Activated naive CD4-positive, alpha-beta T cell treated with anti-CD3 and anti-CD28 coated beads for 36 hours (primary cell): ENCODE measurements at regions of chr16 and their contacts with region 1.

Region 1: GRCh38 chr16:4836727-4837126 is 10.4 kb downstream of the GLYR1 start:
- DNase-seq: no peak
- H3K4me3 Mint-ChIP-seq: no peak overlapping the region
- H3K27ac Mint-ChIP-seq: no peak overlapping the region
- H3K4me1 Mint-ChIP-seq: peaks cover 9% of the 10 kb centered on the region
- H3K27me3 Mint-ChIP-seq: no peaks in the 10 kb centered on the region

Region 2: DNA sequence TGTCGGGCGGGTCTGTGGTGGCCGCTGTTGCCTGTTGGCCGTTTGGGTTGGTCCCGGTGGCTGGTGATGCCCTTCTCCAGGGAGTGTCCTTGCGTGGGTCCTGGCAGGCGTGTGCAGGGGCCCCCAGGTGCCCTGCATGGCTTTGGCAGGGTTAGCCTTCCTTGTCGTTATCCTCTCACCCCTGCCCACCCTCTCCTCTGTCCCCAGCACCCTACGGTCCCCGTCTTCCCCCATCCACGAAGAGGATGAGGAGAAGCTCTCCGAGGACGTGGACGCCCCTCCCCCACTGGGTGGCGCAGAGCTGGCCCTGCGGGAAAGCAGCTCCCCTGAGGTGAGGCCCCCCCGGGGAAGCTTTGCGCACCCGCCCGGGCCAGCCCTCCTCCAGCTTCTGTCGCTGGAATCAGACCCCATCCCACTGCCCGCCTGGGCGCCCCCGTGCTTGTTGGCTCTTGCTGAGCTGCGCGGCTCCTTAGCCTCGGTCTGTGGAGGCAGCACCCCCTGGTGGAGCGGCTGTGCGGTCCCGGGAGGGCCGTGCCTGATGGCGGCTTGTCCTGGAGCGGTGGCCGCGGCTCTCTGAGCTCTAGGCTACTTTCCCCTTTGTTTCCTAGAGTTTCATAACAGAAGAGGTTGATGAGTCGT is 154.0 kb before region 1 on chr16:
- CTCF ChIA-PET with region 1: no interaction called
- intact Hi-C with region 1: no loop called
- DNase-seq: peak; percentile 58
- H3K4me3 Mint-ChIP-seq: no peak overlapping the region
- H3K27ac Mint-ChIP-seq: no peak overlapping the region
- H3K4me1 Mint-ChIP-seq: peaks cover 4% of the 10 kb centered on the region
- H3K27me3 Mint-ChIP-seq: no peaks in the 10 kb centered on the region

Region 3: DNA sequence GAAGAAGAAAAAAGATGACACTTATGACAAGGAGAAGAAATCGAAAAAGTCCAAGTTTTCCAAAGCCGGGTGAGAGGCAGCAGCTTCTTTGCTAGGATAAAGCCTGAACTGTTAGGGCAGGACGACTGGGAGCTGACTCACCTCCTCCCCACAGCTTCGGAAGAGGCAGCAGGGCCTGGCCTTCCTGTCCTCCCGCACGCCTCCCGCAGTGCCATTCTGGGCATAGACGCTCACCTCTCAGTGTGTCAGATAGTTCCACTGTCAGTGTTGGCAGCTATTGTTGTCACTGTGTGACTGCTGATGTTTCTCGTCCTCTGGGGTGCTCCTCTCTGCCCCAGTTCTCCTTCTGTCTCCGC is 23.2 kb after region 1 on chr16:
- CTCF ChIA-PET with region 1: no interaction called
- intact Hi-C with region 1: loop called (anchors 1 kb)
- DNase-seq: no peak
- H3K4me3 Mint-ChIP-seq: no peak overlapping the region
- H3K27ac Mint-ChIP-seq: no peak overlapping the region
- H3K4me1 Mint-ChIP-seq: peaks cover 9% of the 10 kb centered on the region
- H3K27me3 Mint-ChIP-seq: no peaks in the 10 kb centered on the region